Gastrocnemius medialis (tissue), 4 donors: ENCODE measurements at regions of chr17 and their contacts with region 1.

Region 1: DNA sequence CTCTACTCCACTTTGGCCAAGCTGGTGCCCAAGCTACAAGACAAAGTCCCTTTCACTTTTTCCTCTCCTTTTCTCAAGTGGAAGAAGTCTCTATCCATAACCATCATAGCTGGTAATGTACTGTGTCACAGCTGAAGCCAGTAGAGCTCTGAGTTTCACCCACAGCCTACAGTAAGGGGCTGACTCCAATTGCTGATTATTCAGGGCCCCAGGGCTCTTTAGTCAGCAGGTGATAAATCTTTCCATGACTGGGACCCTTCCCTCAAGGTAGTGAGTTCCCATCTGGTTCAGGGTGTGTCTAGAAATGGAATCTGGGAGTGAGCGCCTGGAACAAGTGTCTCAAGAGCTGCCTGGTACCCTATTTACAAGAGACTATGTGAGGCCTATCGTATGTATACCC is 436.0 kb upstream of the CA10 start:
- DNase-seq: no peak
- ATAC-seq: no peak
- H3K4me3 ChIP-seq: no peak overlapping the region
- H3K27ac ChIP-seq: no peak overlapping the region
- H3K4me1 ChIP-seq: no peaks in the 10 kb centered on the region
- H3K27me3 ChIP-seq: no peaks in the 10 kb centered on the region
- CTCF ChIP-seq: no peak
- POLR2A ChIP-seq: no peak

Region 2: GRCh38 chr17:53142890-53143289 is 548.4 kb after region 1 on chr17:
- in situ Hi-C with region 1: loop called in 1 of 4 experiments (anchors 25 kb)
- intact Hi-C with region 1: no loop called
- DNase-seq: no peak
- ATAC-seq: peak in 1 of 2 donors; percentile 66
- H3K4me3 ChIP-seq: peak overlapping the region in 1 of 4 donors; percentile 10
- H3K27ac ChIP-seq: no peak overlapping the region
- H3K4me1 ChIP-seq: peaks cover 0 to 3% of the 10 kb centered on the region in 2 donors
- H3K27me3 ChIP-seq: no peaks in the 10 kb centered on the region
- CTCF ChIP-seq: no peak
- POLR2A ChIP-seq: no peak